AG04449 (cell line): ENCODE measurements at regions of chr12 and their contacts with region 1.

Region 1: GRCh38 chr12:52980693-52981423 is 25.4 kb upstream of the EIF4B start:
- DNase-seq: no peak
- H3K4me3 ChIP-seq: no peak overlapping the region
- CTCF ChIP-seq: peak; percentile 98

Region 2: DNA sequence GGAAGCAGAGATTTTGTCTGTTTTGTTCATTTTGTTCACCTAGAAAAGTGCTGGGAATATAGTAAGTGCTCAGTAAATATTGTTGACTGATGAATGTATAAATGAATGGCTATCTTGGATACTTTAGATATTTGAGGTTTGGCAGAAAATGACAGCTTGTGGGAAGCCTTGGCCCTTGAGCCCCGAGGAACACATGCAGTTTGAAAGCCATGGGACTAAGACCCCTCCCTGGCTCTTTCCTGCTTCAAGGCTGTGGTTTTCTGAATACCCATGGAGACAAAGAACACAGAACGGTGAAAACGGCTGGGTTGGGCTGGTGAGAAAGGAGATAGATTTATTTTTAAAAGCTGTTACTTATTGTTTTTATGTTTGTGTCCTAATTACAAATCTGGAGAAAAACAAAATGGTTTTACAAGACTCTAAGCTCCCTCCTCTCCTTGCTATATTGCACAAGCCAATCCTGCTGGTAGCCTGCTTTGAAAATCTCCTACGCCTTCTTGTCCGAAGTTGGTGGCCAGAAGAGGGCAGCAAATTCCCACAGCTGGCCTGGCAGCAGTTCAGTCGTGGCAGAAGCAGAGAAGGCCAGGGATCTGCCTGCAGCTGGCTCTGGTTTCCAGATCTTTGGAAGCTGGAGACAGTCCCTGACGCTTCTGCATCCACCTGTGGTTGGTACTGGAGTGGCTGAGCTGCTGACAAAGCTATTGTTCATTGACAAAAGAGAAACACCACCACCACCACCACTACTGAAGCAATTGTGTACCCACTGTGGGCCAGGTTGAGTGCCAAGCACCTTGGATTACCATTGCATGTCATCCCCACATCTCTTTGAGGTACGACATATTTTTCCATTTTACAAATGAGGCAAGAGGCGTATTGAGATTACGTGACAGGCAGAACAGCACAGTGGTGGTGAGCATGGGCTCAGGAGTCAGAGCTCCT is 608.4 kb before region 1 on chr12:
- CTCF ChIA-PET with region 1: interaction called, 25 read pairs
- POLR2A ChIA-PET with region 1: no interaction called
- DNase-seq: peak; percentile 61
- H3K4me3 ChIP-seq: no peak overlapping the region
- CTCF ChIP-seq: peak; percentile 92

Region 3: GRCh38 chr12:52759695-52760094 is 221.2 kb before region 1 on chr12:
- CTCF ChIA-PET with region 1: no interaction called
- POLR2A ChIA-PET with region 1: no interaction called
- DNase-seq: no peak
- H3K4me3 ChIP-seq: no peak overlapping the region
- CTCF ChIP-seq: no peak

Region 4: DNA sequence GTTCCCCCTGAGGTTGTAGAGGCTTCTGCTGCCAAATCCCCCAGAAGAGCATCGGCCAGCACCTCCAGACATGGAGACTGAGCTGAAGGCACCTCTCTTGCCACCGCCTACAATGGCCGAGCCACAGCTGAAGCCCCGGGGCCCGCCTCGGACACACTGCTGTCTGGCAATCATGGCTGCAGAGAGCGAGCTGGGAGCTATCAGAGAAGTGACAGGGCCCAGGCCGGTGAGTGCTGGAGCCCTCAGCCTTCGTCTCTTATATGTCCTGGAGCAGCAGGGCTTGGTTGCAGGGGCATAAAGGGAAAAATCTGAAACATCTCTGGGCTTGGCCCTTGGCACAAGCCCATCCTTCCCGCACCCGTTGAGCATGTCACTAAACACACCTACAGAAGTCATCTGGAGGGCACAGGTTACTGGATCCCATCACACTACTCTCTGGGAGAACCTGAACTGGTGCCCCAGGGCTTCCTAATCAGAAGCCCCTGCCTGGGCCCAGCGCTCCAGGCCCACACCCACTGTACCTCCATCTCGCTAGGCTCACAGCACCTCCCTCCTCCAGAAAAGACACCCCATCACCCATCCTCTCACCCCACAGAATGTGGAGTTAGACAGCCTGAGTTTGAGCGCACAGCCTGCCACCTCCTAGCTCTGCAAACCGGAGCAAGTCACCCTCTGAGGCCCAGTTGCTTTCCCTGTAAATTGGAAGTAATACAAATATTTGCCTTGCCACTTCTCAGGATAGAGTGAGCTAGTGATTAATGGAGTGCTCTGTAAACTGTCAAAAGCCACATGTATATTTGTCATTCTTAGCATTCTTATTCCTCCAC is 166.8 kb before region 1 on chr12 and contains the start of gene KRT4:
- CTCF ChIA-PET with region 1: no interaction called
- POLR2A ChIA-PET with region 1: no interaction called
- DNase-seq: no peak
- H3K4me3 ChIP-seq: no peak within 1 kb of the TSS
- CTCF ChIP-seq: no peak

Region 5: GRCh38 chr12:52895061-52895887 is 85.6 kb before region 1 on chr12:
- CTCF ChIA-PET with region 1: interaction called, 1,953 read pairs
- POLR2A ChIA-PET with region 1: no interaction called
- DNase-seq: no peak
- H3K4me3 ChIP-seq: no peak overlapping the region
- CTCF ChIP-seq: no peak

Region 6: DNA sequence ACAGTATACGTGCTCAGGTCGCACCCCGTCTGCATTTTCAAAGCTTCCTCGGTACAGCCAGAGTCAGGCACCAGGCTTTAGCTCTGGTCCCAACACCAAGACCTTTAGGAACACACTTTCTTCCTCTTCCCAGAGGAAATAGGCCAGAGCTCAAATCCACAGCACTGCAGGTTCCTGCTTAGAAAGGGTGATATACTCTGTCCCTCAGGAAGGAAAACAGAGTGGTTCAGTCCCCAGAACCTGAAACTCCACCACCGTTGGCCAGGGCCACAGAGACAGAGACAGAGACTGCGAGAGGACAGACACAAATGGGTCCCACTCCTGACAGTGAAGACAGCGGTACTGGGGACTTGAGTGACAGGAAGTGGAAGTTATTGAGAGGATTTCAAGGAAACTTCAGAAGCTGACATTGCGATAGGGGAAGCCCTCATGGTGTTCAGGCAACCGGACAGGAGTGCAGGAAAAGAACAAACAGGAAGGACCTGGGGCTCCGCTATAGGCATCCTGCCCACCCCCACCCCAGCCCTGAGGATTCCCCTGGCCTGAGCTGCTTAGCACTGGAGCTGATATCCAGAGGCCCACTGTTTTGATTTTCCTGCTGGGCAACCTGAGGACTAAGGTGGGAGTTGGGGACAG is 70.5 kb before region 1 on chr12:
- CTCF ChIA-PET with region 1: interaction called, 22 read pairs
- POLR2A ChIA-PET with region 1: no interaction called
- DNase-seq: no peak
- H3K4me3 ChIP-seq: no peak overlapping the region
- CTCF ChIP-seq: no peak

Region 7: GRCh38 chr12:52949413-52950331 is 31.2 kb before region 1 on chr12:
- CTCF ChIA-PET with region 1: interaction called, 53 read pairs
- POLR2A ChIA-PET with region 1: no interaction called
- DNase-seq: no peak
- H3K4me3 ChIP-seq: peak overlapping the region; percentile 78
- CTCF ChIP-seq: no peak

Region 8: DNA sequence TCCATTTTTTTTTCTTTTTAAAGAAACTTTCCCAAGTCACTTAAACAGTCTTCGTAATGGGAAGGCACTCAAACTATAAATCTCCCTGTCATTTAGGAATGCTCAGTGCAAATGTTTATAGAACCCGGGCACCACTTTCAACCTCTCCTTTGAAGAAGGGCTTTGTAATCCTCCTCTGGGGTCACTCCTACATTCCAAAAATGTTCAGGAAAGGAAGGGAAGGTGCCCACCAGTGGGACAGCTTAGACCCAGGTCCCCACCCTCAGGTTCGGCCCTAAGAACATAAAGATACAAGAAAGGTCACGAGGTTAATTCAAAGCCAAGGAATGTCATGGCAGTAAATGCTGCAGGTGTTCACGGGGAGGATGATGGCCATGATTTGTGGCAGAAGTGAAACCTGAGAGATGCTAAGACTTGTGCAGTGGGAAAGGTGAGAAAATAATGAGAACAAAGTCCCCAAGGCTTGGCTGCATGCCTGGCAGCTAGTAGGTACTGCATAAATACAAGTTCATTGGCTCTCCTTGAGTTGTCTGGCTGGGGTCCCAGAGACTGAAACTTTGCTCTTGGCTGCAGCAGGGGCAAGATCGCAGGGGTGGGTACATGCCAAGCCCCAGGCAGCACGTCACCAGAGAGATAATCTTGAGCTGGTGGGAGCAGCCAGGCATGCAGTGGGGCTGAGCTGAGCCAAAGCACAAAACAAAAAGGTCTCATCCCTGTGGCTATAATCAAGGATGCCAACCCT is 10.9 kb before region 1 on chr12:
- CTCF ChIA-PET with region 1: interaction called, 51 read pairs
- POLR2A ChIA-PET with region 1: no interaction called
- DNase-seq: no peak
- H3K4me3 ChIP-seq: no peak overlapping the region
- CTCF ChIP-seq: no peak

Region 9: DNA sequence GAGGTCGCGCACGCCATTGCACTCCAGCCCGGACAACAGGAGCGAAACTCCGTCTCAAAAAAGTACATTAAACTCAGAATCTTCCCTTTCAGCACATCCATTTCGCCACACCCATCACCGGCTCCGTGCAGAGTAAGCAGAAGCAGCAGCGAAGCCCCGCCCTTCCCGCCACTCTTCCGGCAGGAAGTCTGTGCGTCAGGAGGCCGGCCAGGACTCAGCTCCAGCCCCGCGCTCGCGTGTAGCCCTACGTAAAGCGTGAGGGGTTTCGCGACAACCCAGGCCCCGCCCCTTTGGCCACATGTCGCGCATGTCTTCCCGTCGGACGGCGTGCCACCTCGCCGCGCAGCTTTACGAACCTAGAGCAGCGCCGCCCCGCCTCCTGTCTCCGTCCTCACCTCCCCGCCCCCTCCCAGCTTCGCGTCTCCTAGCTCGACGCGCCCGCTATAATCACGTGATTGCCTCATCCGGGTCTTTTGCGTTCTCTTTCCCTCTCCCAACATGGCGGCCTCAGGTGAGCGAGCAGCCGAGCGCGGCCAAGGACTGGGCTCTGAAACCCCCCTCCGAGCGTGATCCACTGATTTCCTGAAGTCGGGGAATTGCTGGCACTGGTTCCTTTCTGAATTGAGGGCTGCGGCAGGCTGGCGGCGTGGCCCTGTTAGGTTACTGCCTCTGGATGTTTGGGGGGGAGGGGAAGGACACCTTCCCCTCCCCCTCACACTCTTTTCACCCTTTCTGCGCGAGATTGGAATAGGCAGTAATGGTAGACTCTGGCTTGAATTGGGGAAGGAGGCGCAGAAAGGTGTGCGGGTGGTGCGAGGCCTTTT is 25.3 kb after region 1 on chr12 and contains the start of gene EIF4B:
- CTCF ChIA-PET with region 1: interaction called, 10 read pairs
- POLR2A ChIA-PET with region 1: no interaction called
- DNase-seq: peak; percentile 96
- H3K4me3 ChIP-seq: peak within 1 kb of the TSS; percentile 98
- CTCF ChIP-seq: no peak